ENCODE measurements at regions of chr14 and their contacts with region 1.

Region 1: GRCh38 chr14:63641473-63642228 is at the start of gene WDR89:
- DNase-seq: peak; percentile 90 to 99 (median 94)
- ATAC-seq: peak; percentile 83
- H3K4me3 ChIP-seq: peak within 1 kb of the TSS; percentile 96
- H3K4me3 Mint-ChIP-seq: peak within 1 kb of the TSS; percentile 91
- H3K27ac ChIP-seq: peak within 1 kb of the TSS; percentile 98 to 99
- H3K27ac Mint-ChIP-seq: peak within 1 kb of the TSS; percentile 91
- H3K4me1 ChIP-seq: peaks cover 27% of the 10 kb centered on the region
- H3K4me1 Mint-ChIP-seq: peaks cover 43% of the 10 kb centered on the region
- H3K27me3 ChIP-seq: no peaks in the 10 kb centered on the region
- H3K27me3 Mint-ChIP-seq: no peaks in the 10 kb centered on the region
- CTCF ChIP-seq: peak; percentile 47
- total RNA-seq, gene WDR89: 12.4 to 13.4 TPM

Region 2: DNA sequence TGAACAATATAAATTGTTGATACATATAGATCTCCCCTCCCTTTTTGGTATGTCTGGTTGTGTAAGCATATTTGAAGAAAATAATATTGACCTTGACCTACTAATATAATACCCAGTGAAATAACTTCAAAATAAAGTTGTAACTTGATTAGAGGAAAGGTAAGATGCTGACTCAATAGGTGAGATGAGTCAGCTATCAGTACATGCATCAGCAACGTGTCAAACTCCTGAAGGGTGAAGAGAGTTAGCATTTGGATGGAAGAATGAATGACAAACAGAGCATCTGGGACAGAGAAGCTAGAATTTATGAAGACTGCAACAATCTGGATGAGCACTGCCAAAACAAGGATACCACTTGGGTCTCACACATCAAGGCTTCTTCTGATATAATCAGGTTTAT is 173.4 kb before region 1 on chr14:
- CTCF ChIA-PET with region 1: no interaction called
- POLR2A ChIA-PET with region 1: no interaction called
- intact Hi-C with region 1: no loop called
- DNase-seq: no peak
- ATAC-seq: no peak
- H3K4me3 ChIP-seq: no peak overlapping the region
- H3K4me3 Mint-ChIP-seq: peak overlapping the region; percentile 11
- H3K27ac ChIP-seq: no peak overlapping the region
- H3K27ac Mint-ChIP-seq: no peak overlapping the region
- H3K4me1 ChIP-seq: peaks cover 8% of the 10 kb centered on the region
- H3K4me1 Mint-ChIP-seq: peaks cover 58% of the 10 kb centered on the region
- H3K27me3 ChIP-seq: no peaks in the 10 kb centered on the region
- H3K27me3 Mint-ChIP-seq: no peaks in the 10 kb centered on the region
- CTCF ChIP-seq: no peak

Region 3: DNA sequence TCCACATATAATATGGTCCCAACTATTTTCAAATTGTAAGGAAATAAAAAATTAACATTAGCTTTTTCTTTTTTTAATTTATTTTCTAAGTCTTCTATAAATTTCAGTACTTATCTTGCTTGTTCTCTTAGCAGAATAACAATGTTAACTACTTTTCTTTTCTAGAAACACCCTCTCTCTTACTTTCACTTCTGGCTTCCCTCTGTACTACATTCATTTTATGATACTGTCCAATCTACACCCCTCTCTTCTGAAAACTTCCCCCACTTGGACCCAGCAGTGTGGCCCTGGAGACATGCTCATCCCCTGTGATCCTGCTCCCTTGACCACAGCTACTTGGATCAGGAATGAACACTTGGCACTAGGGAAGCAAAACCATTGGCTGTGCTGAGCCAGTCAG is 70.5 kb after region 1 on chr14:
- CTCF ChIA-PET with region 1: no interaction called
- POLR2A ChIA-PET with region 1: interaction called, 22 read pairs
- intact Hi-C with region 1: no loop called
- DNase-seq: no peak
- ATAC-seq: no peak
- H3K4me3 ChIP-seq: no peak overlapping the region
- H3K4me3 Mint-ChIP-seq: no peak overlapping the region
- H3K27ac ChIP-seq: no peak overlapping the region
- H3K27ac Mint-ChIP-seq: no peak overlapping the region
- H3K4me1 ChIP-seq: peaks cover 15% of the 10 kb centered on the region
- H3K4me1 Mint-ChIP-seq: peaks cover 42% of the 10 kb centered on the region
- H3K27me3 ChIP-seq: no peaks in the 10 kb centered on the region
- H3K27me3 Mint-ChIP-seq: no peaks in the 10 kb centered on the region
- CTCF ChIP-seq: no peak

Region 4: GRCh38 chr14:63863004-63863403 is 221.4 kb after region 1 on chr14:
- CTCF ChIA-PET with region 1: no interaction called
- POLR2A ChIA-PET with region 1: interaction called, 3 read pairs
- intact Hi-C with region 1: loop called (anchors 5 to 10 kb)
- DNase-seq: no peak
- ATAC-seq: no peak
- H3K4me3 ChIP-seq: no peak overlapping the region
- H3K4me3 Mint-ChIP-seq: no peak overlapping the region
- H3K27ac ChIP-seq: peak overlapping the region; percentile 91 to 95
- H3K27ac Mint-ChIP-seq: peak overlapping the region; percentile 92
- H3K4me1 ChIP-seq: peaks cover 68% of the 10 kb centered on the region
- H3K4me1 Mint-ChIP-seq: peaks cover 61% of the 10 kb centered on the region
- H3K27me3 ChIP-seq: no peaks in the 10 kb centered on the region
- H3K27me3 Mint-ChIP-seq: no peaks in the 10 kb centered on the region
- CTCF ChIP-seq: no peak

Measured in CD4-positive, alpha-beta T cell (primary cell).